ENCODE measurements at regions of chr12 and their contacts with region 1.

Region 1: GRCh38 chr12:9797722-9798619 is 29.3 kb upstream of the KLRF1 start:
- DNase-seq: peak; percentile 41
- CTCF ChIP-seq: peak; percentile 87

Region 2: DNA sequence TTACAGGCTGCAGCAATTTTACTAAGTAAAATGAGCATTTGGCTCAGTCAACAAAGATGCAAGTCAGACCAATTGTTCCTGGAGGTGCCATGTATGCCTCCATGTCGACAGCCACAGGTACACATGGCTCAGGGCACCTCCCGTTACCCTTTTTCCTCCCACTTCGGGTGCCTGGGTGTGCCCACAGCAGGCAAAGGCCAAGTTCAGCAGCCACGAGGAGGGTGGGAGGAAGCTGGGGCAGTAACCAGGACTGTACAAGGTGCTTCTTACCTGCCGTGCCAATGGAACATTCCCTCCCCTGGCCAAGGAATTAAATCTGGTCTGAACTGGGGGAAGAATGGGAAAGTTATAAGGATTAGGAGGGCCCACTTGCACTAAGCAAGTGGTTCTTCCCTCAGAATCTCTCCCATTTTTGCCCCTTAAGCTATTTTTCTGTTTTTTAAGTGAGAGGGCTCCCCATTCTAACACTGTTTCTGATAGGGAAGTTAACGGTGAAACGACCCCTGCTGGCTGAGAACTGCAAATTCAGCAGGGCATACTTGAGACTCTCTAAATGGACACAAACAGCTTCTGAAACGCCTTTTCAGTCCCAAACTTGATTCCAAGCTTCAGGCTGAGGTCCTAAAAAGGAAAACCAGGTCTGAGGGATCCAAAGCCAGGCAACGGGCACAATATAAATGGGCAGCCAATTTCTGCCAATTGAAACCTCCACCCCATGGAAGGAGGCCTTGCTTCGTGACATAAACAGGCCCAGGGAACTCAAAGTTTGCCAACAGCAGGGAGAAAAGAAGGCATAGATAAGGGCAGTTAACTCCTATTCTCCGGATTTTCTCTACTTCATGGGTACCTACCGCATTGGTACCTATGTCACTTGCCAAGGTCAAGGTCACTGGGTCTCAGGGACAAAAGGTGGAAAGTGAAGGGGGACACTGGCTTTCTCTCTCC is 89.8 kb before region 1 on chr12:
- CTCF ChIA-PET with region 1: no interaction called
- POLR2A ChIA-PET with region 1: no interaction called
- DNase-seq: peak; percentile 19
- CTCF ChIP-seq: peak; percentile 71

Region 3: DNA sequence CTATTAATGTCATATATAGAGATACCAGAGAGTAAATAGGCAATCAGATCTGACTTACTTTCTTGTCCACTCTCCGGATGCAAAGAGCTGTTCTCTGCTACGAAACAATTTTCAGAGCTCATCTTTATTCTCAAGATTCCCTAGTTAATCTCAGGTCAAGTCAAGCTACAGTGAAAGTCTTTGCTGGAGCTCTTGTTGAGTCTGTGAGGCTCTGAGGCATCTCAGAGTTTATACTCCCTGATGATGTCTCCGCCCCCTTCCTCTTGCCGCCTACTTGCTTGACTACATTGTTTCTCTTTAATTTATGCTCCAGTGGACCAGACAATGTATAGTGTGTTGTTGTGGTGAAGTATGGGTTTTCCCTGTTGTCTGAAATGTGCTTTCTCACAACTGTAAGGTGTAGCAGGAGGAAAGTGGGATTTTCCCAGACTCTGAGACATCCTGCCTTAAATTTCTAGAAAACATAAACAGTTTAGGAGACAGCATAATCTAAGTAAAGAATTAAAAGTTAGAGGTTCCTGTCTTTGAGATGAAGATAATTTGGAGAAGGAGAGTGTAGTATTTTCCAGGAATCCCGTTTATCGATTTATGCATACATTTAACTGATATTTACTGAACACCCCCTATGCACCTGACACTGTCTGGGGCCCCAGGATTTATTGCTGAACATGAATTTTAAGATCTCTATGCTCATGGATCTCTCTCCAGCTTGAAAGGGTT is 37.1 kb before region 1 on chr12 and contains the start of gene CD69:
- CTCF ChIA-PET with region 1: interaction called, 287 read pairs
- POLR2A ChIA-PET with region 1: interaction called, 3 read pairs
- DNase-seq: peak; percentile 42
- CTCF ChIP-seq: no peak